Naive thymus-derived CD4-positive, alpha-beta T cell (primary cell): ENCODE measurements at regions of chr2 and their contacts with region 1.

Region 1: DNA sequence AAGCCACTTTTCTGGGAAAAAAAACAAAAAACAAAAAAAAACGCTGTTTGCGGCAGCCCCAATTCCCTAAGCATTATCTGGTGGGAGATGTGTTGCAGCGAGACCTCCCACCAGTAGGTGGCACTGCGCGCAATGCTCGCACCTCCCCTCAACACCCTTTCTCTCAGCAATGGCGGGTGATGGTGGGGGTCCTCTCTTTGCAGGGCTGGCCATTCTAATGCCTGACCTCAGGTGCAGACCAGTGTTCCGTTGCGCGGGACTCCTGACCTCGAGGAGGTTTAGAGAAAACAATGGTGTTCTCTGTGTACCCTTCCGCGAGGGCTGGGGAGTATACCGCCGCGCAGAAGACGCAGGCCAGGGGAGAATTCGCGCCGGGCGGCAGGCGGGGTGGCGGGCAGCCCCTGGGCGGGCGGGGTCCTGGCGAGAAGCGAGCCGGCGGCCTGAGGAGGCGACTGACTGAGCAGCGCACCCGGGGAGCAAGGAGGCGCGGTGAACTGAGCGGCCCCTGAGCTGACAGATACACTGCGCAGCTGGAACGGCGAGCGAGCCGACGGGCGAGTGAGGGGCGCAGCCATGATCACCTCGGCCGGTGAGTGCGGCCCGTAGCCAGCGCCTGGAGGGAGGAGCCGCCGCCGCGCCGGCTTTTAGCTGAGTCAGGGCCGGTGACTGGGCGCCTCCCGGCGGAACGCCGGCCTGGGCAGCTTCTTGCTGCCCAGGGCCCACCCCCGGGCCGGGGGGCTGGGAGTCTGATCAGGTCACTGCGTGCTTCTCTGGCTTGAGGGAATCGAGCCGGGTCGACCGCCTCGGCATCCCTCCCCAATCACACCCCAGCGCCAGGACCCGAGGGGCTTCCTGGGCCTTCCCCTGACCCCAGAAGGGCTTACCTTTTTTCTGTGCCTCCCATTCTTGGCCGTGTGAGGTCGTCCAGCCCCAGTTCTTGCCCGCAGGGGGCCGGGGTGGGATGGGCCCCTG is at the start of gene PSMD1:
- DNase-seq: peak; percentile 89 to 98 (median 96)
- ATAC-seq: peak; percentile 96
- H3K4me3 ChIP-seq: peak within 1 kb of the TSS; percentile 70
- H3K4me3 Mint-ChIP-seq: peak within 1 kb of the TSS; percentile 96 to 99 (median 99)
- H3K27ac ChIP-seq: peak within 1 kb of the TSS; percentile 91
- H3K27ac Mint-ChIP-seq: peak within 1 kb of the TSS; percentile 99 to 100 (median 100)
- H3K4me1 ChIP-seq: peaks cover 18 to 23% of the 10 kb centered on the region in 2 donors
- H3K4me1 Mint-ChIP-seq: peaks cover 33 to 62% (median 51%) of the 10 kb centered on the region in 7 donors
- H3K27me3 ChIP-seq: no peaks in the 10 kb centered on the region
- H3K27me3 Mint-ChIP-seq: peaks cover 0 to 11% (median 7%) of the 10 kb centered on the region in 5 donors
- total RNA-seq, gene PSMD1: 30.3 to 121 (median 40.1) TPM

Region 2: DNA sequence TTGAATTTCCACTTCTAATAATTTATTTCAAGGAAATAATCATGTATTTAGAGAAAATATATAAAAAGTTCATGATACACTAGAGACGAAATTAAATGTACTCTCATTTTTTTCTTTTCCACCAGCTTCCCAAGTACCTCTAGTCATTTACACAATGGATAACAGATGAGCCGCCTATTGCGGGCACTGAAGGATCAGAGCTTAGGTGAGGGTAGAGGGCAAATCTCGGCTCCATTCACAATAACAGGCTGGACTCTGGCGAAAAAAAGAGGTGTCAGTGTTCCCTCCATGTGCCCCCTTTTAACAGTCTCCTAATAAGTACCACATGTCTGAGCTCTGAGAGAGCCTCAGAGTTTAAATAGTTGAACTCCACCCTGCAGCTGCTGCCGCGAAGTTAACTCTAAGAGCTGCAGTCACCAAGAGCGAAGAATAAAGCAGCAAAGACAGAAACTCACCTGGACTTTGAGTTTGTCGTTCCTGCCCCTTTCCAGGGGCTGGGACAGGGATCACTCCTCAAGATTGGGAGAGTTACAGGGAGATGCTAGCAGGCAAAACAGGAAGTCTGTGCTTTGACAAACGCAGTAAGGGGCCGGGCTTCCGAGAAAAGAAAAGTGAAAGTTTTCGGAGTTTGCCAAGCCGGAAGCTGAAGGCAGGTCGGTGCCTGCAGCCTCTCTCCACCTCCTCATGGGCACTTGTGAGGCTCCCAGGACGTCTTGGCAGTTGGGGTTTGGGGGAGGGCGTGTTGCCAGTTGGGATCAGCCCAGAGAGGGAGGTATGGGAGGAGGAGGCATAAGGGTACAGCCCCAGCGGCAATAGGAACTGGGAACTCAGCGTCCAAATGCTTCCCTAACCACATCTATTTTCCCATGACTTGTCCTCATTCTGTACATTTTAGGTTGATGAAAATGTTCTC is 837.1 kb before region 1 on chr2 and contains the start of gene SP110:
- CTCF ChIA-PET with region 1: no interaction called
- POLR2A ChIA-PET with region 1: no interaction called
- intact Hi-C with region 1: loop called in 1 of 2 experiments (anchors 10 kb)
- DNase-seq: peak; percentile 38 to 84 (median 81)
- ATAC-seq: peak; percentile 93
- H3K4me3 ChIP-seq: peak within 1 kb of the TSS; percentile 95
- H3K4me3 Mint-ChIP-seq: peak within 1 kb of the TSS; percentile 89 to 100 (median 99)
- H3K27ac ChIP-seq: peak within 1 kb of the TSS; percentile 83
- H3K27ac Mint-ChIP-seq: peak within 1 kb of the TSS; percentile 94 to 100 (median 99)
- H3K4me1 ChIP-seq: peaks cover 22 to 36% of the 10 kb centered on the region in 2 donors
- H3K4me1 Mint-ChIP-seq: peaks cover 44 to 75% (median 67%) of the 10 kb centered on the region in 7 donors
- H3K27me3 ChIP-seq: no peaks in the 10 kb centered on the region
- H3K27me3 Mint-ChIP-seq: no peaks in the 10 kb centered on the region
- total RNA-seq, gene SP110: 97.5 to 182 (median 117) TPM

Region 3: DNA sequence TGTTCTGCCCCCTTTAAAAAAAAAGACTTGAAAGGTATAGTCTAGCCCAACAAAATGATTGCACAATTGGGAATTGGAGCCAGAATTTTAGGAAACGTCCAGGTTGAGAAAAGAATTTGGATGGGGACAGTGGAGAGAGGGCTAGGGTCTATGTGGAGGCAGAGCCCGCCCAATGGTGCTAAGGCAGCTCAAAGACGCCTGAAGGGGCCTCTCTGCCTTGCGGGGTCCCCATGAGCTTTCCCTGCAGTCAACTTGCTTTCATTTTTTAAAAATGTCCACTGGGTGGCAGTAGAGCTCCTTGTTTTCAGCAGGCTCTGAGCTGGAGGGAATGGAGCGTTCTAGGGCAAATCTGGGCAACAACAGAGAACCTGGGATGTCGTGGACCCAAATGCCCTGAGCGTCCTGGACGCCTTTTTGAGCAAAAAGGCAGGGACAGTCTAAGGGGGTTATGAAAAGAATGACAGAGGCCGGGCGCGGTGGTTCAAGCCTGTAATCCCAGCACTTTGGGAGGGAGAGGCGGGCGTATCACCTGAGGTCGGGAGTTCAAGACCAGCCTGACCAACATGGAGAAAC is 232.2 kb before region 1 on chr2:
- CTCF ChIA-PET with region 1: interaction called, 7 read pairs
- POLR2A ChIA-PET with region 1: no interaction called
- intact Hi-C with region 1: loop called (anchors 1 to 2 kb)
- DNase-seq: peak in 8 of 9 donors; percentile 36 to 76 (median 71)
- ATAC-seq: peak; percentile 84
- H3K4me3 ChIP-seq: no peak overlapping the region
- H3K4me3 Mint-ChIP-seq: peak overlapping the region in 9 of 10 donors; percentile 1 to 77 (median 23)
- H3K27ac ChIP-seq: no peak overlapping the region
- H3K27ac Mint-ChIP-seq: peak overlapping the region in 4 of 9 donors; percentile 21 to 64 (median 40)
- H3K4me1 ChIP-seq: no peaks in the 10 kb centered on the region
- H3K4me1 Mint-ChIP-seq: peaks cover 0 to 25% (median 9%) of the 10 kb centered on the region in 7 donors
- H3K27me3 ChIP-seq: peaks cover 0 to 5% of the 10 kb centered on the region in 2 donors
- H3K27me3 Mint-ChIP-seq: peaks cover 20 to 42% (median 30%) of the 10 kb centered on the region in 5 donors

Region 4: GRCh38 chr2:231198291-231199173 is 141.8 kb after region 1 on chr2 and contains the start of gene ARMC9:
- CTCF ChIA-PET with region 1: no interaction called
- POLR2A ChIA-PET with region 1: no interaction called
- intact Hi-C with region 1: loop called in 1 of 2 experiments (anchors 1 kb)
- DNase-seq: peak; percentile 45 to 89 (median 63)
- ATAC-seq: peak; percentile 94
- H3K4me3 ChIP-seq: peak within 1 kb of the TSS; percentile 100
- H3K4me3 Mint-ChIP-seq: peak within 1 kb of the TSS; percentile 87 to 97 (median 94)
- H3K27ac ChIP-seq: peak within 1 kb of the TSS; percentile 61
- H3K27ac Mint-ChIP-seq: peak within 1 kb of the TSS in 7 of 9 donors; percentile 21 to 81 (median 62)
- H3K4me1 ChIP-seq: peaks cover 0 to 4% of the 10 kb centered on the region in 2 donors
- H3K4me1 Mint-ChIP-seq: peaks cover 0 to 15% (median 13%) of the 10 kb centered on the region in 7 donors
- H3K27me3 ChIP-seq: no peaks in the 10 kb centered on the region
- H3K27me3 Mint-ChIP-seq: peaks cover 0 to 37% (median 0%) of the 10 kb centered on the region in 5 donors
- total RNA-seq, gene ARMC9: 0.69 to 2.0 (median 0.85) TPM

Region 5: DNA sequence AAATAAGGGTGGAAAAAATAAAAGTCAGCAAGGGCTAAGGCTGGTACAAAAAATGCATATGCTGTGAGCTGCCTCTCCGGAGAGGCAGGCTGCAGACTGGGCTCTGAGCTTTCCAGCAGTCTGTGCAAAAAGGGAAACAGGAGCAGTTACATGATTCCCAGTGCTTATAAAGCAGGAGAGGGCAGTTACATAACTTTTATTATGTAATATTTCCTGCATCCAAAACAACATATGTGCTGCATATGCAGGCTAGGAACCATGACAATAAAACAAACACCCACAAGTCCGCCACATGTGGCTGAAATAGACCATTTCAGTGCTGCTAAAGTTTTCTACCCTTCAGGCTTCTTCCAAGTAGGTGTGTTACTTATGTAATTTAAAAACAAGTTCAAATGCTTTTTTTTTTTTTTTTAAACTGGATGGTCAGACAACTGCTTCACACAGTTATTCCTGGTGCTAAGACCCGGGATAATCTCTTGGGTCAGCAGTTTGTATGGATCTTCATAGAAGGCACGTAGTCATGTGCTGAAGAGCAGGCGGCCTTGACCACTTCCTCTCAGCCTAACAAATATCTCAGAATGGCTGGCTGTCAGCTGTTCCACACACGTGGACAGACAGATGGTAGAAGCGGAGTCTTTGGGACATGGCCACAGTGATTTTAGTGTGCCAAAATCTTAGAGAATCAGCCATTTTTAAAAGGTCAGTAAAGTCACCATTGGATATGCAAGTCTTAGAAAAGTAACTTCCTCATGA is 185.2 kb after region 1 on chr2:
- CTCF ChIA-PET with region 1: no interaction called
- POLR2A ChIA-PET with region 1: no interaction called
- intact Hi-C with region 1: no loop called
- DNase-seq: no peak
- ATAC-seq: peak; percentile 44
- H3K4me3 ChIP-seq: no peak overlapping the region
- H3K4me3 Mint-ChIP-seq: no peak overlapping the region
- H3K27ac ChIP-seq: no peak overlapping the region
- H3K27ac Mint-ChIP-seq: no peak overlapping the region
- H3K4me1 ChIP-seq: no peaks in the 10 kb centered on the region
- H3K4me1 Mint-ChIP-seq: no peaks in the 10 kb centered on the region
- H3K27me3 ChIP-seq: no peaks in the 10 kb centered on the region
- H3K27me3 Mint-ChIP-seq: no peaks in the 10 kb centered on the region

Region 6: GRCh38 chr2:231514103-231514950 is 457.6 kb after region 1 on chr2:
- CTCF ChIA-PET with region 1: no interaction called
- POLR2A ChIA-PET with region 1: no interaction called
- intact Hi-C with region 1: loop called in 1 of 2 experiments (anchors 1 kb)
- DNase-seq: peak; percentile 92 to 99 (median 98)
- ATAC-seq: peak; percentile 99
- H3K4me3 ChIP-seq: peak overlapping the region; percentile 84
- H3K4me3 Mint-ChIP-seq: peak overlapping the region; percentile 80 to 95 (median 92)
- H3K27ac ChIP-seq: peak overlapping the region; percentile 93
- H3K27ac Mint-ChIP-seq: peak overlapping the region; percentile 93 to 99 (median 98)
- H3K4me1 ChIP-seq: peaks cover 5 to 11% of the 10 kb centered on the region in 2 donors
- H3K4me1 Mint-ChIP-seq: peaks cover 0 to 21% (median 14%) of the 10 kb centered on the region in 7 donors
- H3K27me3 ChIP-seq: no peaks in the 10 kb centered on the region
- H3K27me3 Mint-ChIP-seq: peaks cover 0 to 4% (median 0%) of the 10 kb centered on the region in 5 donors

Region 7: GRCh38 chr2:231961349-231962166 is 904.8 kb after region 1 on chr2 and contains the start of gene DIS3L2:
- CTCF ChIA-PET with region 1: no interaction called
- POLR2A ChIA-PET with region 1: no interaction called
- intact Hi-C with region 1: loop called in 1 of 2 experiments (anchors 10 kb)
- DNase-seq: peak; percentile 66 to 83 (median 81)
- ATAC-seq: peak; percentile 96
- H3K4me3 ChIP-seq: peak within 1 kb of the TSS; percentile 79
- H3K4me3 Mint-ChIP-seq: peak within 1 kb of the TSS; percentile 83 to 96 (median 91)
- H3K27ac ChIP-seq: peak within 1 kb of the TSS; percentile 77
- H3K27ac Mint-ChIP-seq: peak within 1 kb of the TSS; percentile 78 to 96 (median 94)
- H3K4me1 ChIP-seq: peaks cover 14 to 17% of the 10 kb centered on the region in 2 donors
- H3K4me1 Mint-ChIP-seq: peaks cover 22 to 52% (median 45%) of the 10 kb centered on the region in 7 donors
- H3K27me3 ChIP-seq: no peaks in the 10 kb centered on the region
- H3K27me3 Mint-ChIP-seq: peaks cover 0 to 3% (median under 1%) of the 10 kb centered on the region in 5 donors
- total RNA-seq, gene DIS3L2: 47.1 to 78.4 (median 66.4) TPM